CD8-positive, alpha-beta T cell (primary cell): ENCODE measurements at regions of chr14 and their contacts with region 1.

Region 1: DNA sequence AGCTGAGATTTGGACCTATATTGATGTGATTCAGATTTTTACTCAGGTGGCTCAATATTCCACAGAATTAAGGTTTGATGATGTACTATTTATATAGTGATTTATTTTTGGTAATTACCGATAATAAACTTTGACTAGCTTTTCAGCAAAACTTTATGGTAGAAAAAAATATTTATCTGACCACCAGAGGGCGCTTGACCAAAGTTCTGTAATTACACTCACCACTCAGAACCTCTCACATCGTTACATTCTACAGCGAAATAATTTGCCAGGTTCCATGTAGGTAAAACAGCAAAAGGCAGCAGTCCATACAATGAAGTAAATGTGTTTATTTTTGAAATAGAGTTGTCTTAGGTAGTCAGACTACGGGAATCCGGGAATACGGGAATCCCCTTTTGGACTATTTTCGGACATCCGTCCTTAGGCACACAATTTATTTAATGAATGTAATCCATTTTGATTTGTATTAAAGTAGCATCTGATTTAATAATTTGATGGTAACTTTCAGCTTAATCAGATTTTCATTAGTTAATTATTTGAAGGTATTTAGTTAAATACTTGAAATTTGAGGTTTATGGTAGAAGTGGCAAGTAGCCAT is 143.0 kb upstream of the DDHD1 start:
- DNase-seq: peak in 3 of 9 experiments; percentile 24 to 55 (median 45)
- ATAC-seq: no peak
- H3K4me3 ChIP-seq: no peak overlapping the region
- H3K4me3 Mint-ChIP-seq: no peak overlapping the region
- H3K27ac ChIP-seq: no peak overlapping the region
- H3K27ac Mint-ChIP-seq: no peak overlapping the region
- H3K4me1 ChIP-seq: no peaks in the 10 kb centered on the region
- H3K4me1 Mint-ChIP-seq: no peaks in the 10 kb centered on the region
- H3K27me3 ChIP-seq: no peaks in the 10 kb centered on the region
- H3K27me3 Mint-ChIP-seq: no peaks in the 10 kb centered on the region
- CTCF ChIP-seq: peak; percentile 92

Region 2: GRCh38 chr14:53161758-53162435 is 134.2 kb before region 1 on chr14:
- CTCF ChIA-PET with region 1: no interaction called
- POLR2A ChIA-PET with region 1: no interaction called
- intact Hi-C with region 1: no loop called
- DNase-seq: no peak
- ATAC-seq: peak; percentile 23
- H3K4me3 ChIP-seq: no peak overlapping the region
- H3K4me3 Mint-ChIP-seq: no peak overlapping the region
- H3K27ac ChIP-seq: no peak overlapping the region
- H3K27ac Mint-ChIP-seq: no peak overlapping the region
- H3K4me1 ChIP-seq: no peaks in the 10 kb centered on the region
- H3K4me1 Mint-ChIP-seq: peaks cover 6% of the 10 kb centered on the region
- H3K27me3 ChIP-seq: no peaks in the 10 kb centered on the region
- H3K27me3 Mint-ChIP-seq: no peaks in the 10 kb centered on the region
- CTCF ChIP-seq: no peak

Region 3: DNA sequence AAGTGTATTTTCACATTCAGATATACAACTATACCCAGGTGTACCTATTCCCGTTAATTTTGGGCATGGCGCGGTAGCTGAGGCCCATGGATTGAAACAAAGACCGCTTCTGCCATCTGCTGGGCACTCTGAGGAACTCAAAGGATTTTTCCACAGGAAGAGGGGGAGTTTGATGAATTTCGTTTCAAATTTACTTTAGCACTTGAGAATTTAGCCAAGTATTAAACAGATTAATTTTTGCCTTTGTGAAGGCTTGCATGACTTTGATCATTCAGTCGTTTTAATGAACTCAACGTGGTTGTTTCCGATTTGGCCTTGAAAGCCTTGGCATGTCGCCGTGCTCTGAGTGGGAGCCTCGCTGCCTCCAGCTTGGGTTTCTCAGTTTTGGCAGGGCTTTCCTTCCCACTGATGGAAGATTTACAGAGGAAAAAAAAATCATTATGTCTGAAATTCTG is 10.2 kb after region 1 on chr14:
- CTCF ChIA-PET with region 1: interaction called, 34 read pairs
- POLR2A ChIA-PET with region 1: interaction called, 3 read pairs
- intact Hi-C with region 1: no loop called
- DNase-seq: peak in 6 of 9 experiments; percentile 13 to 61 (median 36)
- ATAC-seq: peak; percentile 34
- H3K4me3 ChIP-seq: peak overlapping the region; percentile 1 to 17
- H3K4me3 Mint-ChIP-seq: peak overlapping the region; percentile 52
- H3K27ac ChIP-seq: no peak overlapping the region
- H3K27ac Mint-ChIP-seq: no peak overlapping the region
- H3K4me1 ChIP-seq: no peaks in the 10 kb centered on the region
- H3K4me1 Mint-ChIP-seq: peaks cover 4% of the 10 kb centered on the region
- H3K27me3 ChIP-seq: peaks cover 0 to 2% of the 10 kb centered on the region in 2 experiments
- H3K27me3 Mint-ChIP-seq: peaks cover 5% of the 10 kb centered on the region
- CTCF ChIP-seq: peak; percentile 62

Region 4: DNA sequence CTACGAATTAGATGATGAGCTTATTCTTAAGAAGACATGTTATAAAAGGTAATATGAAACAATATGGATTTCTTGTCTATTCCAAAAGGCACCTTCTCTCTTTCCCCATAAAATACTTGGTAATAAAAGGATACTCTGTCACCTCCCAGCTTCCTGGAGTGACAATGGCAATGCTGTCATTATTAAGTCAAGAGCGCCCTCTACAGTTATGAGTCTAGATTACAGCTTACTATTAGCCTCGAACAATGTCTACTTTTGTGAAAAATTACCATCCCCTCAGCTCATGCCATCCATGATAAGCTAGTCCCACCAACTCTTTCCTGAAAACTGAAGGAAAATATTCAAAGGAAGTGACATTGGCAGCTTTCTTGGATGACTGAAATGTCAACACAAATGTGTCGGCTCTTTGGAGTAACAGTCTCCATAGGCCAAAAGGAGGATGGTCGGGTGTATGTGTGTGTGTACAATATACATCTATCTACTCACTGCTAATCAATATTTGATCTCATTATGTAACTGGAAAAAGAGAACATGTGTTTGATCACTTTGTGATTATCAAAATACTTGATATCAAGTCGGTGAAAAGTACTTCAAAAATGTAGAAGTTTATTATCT is 1052.0 kb after region 1 on chr14:
- CTCF ChIA-PET with region 1: interaction called, 4 read pairs
- POLR2A ChIA-PET with region 1: no interaction called
- intact Hi-C with region 1: loop called in 1 of 2 experiments (anchors 2 kb)
- DNase-seq: peak in 2 of 9 experiments; percentile 13 to 31
- ATAC-seq: no peak
- H3K4me3 ChIP-seq: no peak overlapping the region
- H3K4me3 Mint-ChIP-seq: no peak overlapping the region
- H3K27ac ChIP-seq: no peak overlapping the region
- H3K27ac Mint-ChIP-seq: no peak overlapping the region
- H3K4me1 ChIP-seq: no peaks in the 10 kb centered on the region
- H3K4me1 Mint-ChIP-seq: peaks cover 3% of the 10 kb centered on the region
- H3K27me3 ChIP-seq: no peaks in the 10 kb centered on the region
- H3K27me3 Mint-ChIP-seq: peaks cover 6% of the 10 kb centered on the region
- CTCF ChIP-seq: peak; percentile 54